ENCODE measurements at regions of chr6 and their contacts with region 1.

Region 1: GRCh38 chr6:36263390-36264000 is 6.4 kb upstream of the PNPLA1 start:
- DNase-seq: no peak
- H3K4me3 ChIP-seq: no peak overlapping the region
- H3K27ac ChIP-seq: no peak overlapping the region
- H3K4me1 ChIP-seq: no peaks in the 10 kb centered on the region
- H3K27me3 ChIP-seq: no peaks in the 10 kb centered on the region
- CTCF ChIP-seq: no peak
- POLR2A ChIP-seq: no peak

Region 2: GRCh38 chr6:36280467-36280866 is 17.0 kb after region 1 on chr6:
- intact Hi-C with region 1: no loop called
- DNase-seq: no peak
- H3K4me3 ChIP-seq: no peak overlapping the region
- H3K27ac ChIP-seq: no peak overlapping the region
- H3K4me1 ChIP-seq: no peaks in the 10 kb centered on the region
- H3K27me3 ChIP-seq: peaks cover 0 to 9% of the 10 kb centered on the region in 2 donors
- CTCF ChIP-seq: no peak
- POLR2A ChIP-seq: no peak

Region 3: DNA sequence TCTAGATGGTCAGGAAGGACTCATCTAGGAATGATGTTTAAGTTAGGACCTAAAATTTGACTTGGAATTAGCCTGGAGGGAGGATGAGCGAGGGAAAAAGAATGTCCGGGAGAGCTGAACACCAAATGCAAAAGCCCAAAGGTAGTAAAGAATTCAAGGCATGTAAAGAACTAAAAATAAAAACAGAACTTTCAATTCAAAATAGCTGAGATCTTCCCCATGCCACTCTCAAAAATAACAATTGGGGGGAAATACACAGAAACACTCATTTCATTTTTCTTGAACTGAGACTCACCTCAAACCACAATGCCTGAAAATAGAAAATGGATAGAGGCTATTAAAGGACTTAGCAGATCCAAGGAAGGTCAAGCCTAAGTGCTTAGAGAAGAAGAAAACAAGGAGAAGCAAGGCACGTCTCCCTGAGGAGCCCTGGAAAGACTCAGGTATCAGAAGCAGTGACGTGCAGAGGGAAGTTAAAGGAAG is 168.7 kb after region 1 on chr6:
- intact Hi-C with region 1: loop called (anchors 5 kb)
- DNase-seq: no peak
- H3K4me3 ChIP-seq: no peak overlapping the region
- H3K27ac ChIP-seq: no peak overlapping the region
- H3K4me1 ChIP-seq: no peaks in the 10 kb centered on the region
- H3K27me3 ChIP-seq: no peaks in the 10 kb centered on the region
- CTCF ChIP-seq: no peak
- POLR2A ChIP-seq: no peak

Measured in breast epithelium (tissue), 4 donors.